AG04449 (cell line): ENCODE measurements at regions of chr3 and their contacts with region 1.

Region 1: DNA sequence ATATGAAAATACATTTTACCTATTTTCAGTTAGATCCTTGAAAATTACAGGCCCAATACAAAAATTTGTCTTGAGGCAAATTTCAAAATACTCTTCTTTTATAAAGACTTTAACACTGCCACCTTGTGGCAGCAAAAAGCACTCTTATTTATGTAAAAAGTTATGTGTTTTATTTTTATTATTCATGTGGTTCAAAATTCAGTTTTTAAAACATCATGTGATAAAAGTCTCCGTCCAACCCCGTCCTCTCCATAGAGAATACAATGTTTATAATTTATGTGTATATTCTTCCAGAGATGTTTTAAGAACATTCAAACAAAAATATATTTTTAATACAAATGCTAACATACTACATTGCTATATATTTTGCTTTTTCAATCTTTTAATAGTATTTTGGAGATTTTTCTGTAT is 36.9 kb upstream of the TRIM59 start:
- DNase-seq: no peak
- H3K4me3 ChIP-seq: no peak overlapping the region
- CTCF ChIP-seq: no peak

Region 2: DNA sequence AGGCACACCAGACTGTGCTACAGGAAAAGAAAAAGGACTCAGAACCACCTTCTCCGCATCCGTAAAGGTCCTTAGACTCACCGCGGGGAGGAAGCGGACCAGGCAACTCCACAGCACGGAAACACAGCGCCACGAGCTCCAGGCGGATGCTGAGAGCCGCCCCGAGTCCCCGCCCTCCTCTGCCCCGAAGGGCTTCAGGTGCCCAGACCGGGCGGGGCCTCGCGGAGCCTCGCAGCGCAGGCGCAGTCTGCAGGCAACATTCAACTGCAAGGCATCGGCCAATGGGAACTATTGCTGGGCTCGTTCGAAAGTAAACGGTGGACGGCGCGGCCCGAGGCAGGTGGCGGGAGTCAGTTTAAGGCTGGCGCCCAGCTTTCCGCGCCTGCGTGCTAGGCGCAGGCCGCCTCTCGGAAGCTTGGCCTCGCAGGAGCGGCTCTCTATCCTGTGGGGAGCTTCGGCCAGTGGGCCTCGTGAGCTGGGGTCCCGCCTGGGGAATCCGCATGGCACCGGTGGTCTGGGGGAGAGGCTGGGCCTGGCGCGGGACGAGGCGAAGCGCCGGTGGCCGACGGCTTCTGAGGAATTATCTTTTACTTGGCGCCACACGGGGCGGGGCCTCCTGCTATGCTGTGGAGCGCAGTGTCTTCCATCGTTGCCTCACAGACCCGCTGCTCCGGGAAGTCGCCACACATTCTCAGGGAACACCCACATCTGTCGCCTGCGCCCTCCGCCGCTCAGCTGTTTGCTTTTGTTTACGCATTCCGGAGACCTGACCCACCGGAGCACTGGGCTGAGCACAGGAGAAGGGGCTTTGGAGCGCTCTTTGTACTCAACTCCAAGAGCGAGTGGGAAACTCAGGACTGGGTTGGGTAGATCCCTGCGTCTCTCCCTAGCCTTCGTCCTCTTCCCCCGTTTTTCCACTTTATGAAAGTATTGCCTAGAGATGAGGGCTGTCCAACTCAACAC is 36.5 kb before region 1 on chr3 and contains the start of gene TRIM59:
- CTCF ChIA-PET with region 1: interaction called, 25 read pairs
- POLR2A ChIA-PET with region 1: interaction called, 5 read pairs
- DNase-seq: peak; percentile 73
- H3K4me3 ChIP-seq: peak within 1 kb of the TSS; percentile 88
- CTCF ChIP-seq: peak; percentile 22

Region 3: GRCh38 chr3:160473978-160474377 is 12.5 kb before region 1 on chr3:
- CTCF ChIA-PET with region 1: interaction called, 34 read pairs
- POLR2A ChIA-PET with region 1: interaction called, 3 read pairs
- DNase-seq: peak; percentile 95
- H3K4me3 ChIP-seq: no peak overlapping the region
- CTCF ChIP-seq: no peak

Region 4: GRCh38 chr3:160498202-160498601 is 11.7 kb after region 1 on chr3:
- CTCF ChIA-PET with region 1: interaction called, 32 read pairs
- POLR2A ChIA-PET with region 1: no interaction called
- DNase-seq: no peak
- H3K4me3 ChIP-seq: no peak overlapping the region
- CTCF ChIP-seq: no peak